Activated CD4-positive, alpha-beta T cell treated with anti-CD3 and anti-CD28 coated beads for 36 hours (primary cell): ENCODE measurements at regions of chr6 and their contacts with region 1.

Region 1: GRCh38 chr6:43053545-43054205 is at the start of gene CUL7:
- DNase-seq: peak; percentile 96
- ATAC-seq: peak; percentile 99
- H3K4me3 Mint-ChIP-seq: peak within 1 kb of the TSS; percentile 99
- H3K27ac Mint-ChIP-seq: peak within 1 kb of the TSS; percentile 97
- H3K4me1 Mint-ChIP-seq: peaks cover 43% of the 10 kb centered on the region
- H3K27me3 Mint-ChIP-seq: no peaks in the 10 kb centered on the region
- total RNA-seq, gene CUL7: 16.3 to 18.0 TPM

Region 2: DNA sequence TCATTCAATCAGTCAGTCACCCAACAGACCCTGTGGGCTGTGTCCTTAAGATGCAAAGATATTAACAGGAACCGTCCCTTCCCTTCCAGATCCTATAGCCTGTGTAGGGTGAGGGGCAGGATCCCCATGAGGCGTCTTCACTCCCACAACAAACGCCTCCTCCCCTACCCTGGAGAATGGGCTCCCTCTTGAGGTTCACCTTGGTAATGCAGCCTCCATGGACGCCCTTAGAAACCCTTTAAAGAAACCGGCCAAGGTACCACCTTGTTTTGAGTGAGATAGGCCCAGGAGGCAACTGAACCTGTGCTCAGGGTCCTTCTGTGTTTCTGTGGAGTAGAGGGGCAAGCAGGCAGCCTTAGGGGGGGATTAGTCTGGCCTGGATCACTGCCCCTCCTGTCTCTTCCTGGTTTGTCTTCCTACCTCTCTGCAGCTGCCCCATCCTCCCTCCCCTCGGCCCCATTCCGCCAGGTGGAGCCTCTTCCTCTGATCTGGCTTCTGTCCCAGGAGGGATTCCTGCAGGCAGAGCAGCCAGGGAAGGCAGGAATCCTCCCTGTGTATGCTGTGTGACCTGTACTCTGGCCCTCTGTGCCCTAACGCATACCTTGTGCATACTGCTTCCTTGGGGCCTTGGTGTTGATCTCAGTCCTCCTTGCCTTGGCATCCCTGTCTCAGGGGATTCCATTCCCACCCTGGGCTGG is 887.1 kb before region 1 on chr6:
- CTCF ChIA-PET with region 1: no interaction called
- POLR2A ChIA-PET with region 1: no interaction called
- intact Hi-C with region 1: no loop called
- DNase-seq: peak; percentile 89
- ATAC-seq: peak; percentile 97
- H3K4me3 Mint-ChIP-seq: no peak overlapping the region
- H3K27ac Mint-ChIP-seq: no peak overlapping the region
- H3K4me1 Mint-ChIP-seq: peaks cover 2% of the 10 kb centered on the region
- H3K27me3 Mint-ChIP-seq: peaks cover 2% of the 10 kb centered on the region

Region 3: GRCh38 chr6:42610416-42610815 is 443.3 kb before region 1 on chr6:
- CTCF ChIA-PET with region 1: no interaction called
- POLR2A ChIA-PET with region 1: no interaction called
- intact Hi-C with region 1: no loop called
- DNase-seq: no peak
- ATAC-seq: peak; percentile 94
- H3K4me3 Mint-ChIP-seq: no peak overlapping the region
- H3K27ac Mint-ChIP-seq: peak overlapping the region; percentile 49
- H3K4me1 Mint-ChIP-seq: peaks cover 10% of the 10 kb centered on the region
- H3K27me3 Mint-ChIP-seq: no peaks in the 10 kb centered on the region

Region 4: GRCh38 chr6:42864602-42865001 is 189.1 kb before region 1 on chr6:
- CTCF ChIA-PET with region 1: no interaction called
- POLR2A ChIA-PET with region 1: no interaction called
- intact Hi-C with region 1: no loop called
- DNase-seq: peak; percentile 26
- ATAC-seq: no peak
- H3K4me3 Mint-ChIP-seq: no peak overlapping the region
- H3K27ac Mint-ChIP-seq: peak overlapping the region; percentile 66
- H3K4me1 Mint-ChIP-seq: no peaks in the 10 kb centered on the region
- H3K27me3 Mint-ChIP-seq: no peaks in the 10 kb centered on the region

Region 5: GRCh38 chr6:42984001-42984923 is 69.4 kb before region 1 on chr6 and contains the start of gene PPP2R5D:
- CTCF ChIA-PET with region 1: interaction called, 3 read pairs
- POLR2A ChIA-PET with region 1: interaction called, 4 read pairs
- intact Hi-C with region 1: loop called (anchors 1 kb)
- DNase-seq: peak; percentile 98
- ATAC-seq: peak; percentile 92
- H3K4me3 Mint-ChIP-seq: peak within 1 kb of the TSS; percentile 79
- H3K27ac Mint-ChIP-seq: peak within 1 kb of the TSS; percentile 82
- H3K4me1 Mint-ChIP-seq: peaks cover 52% of the 10 kb centered on the region
- H3K27me3 Mint-ChIP-seq: no peaks in the 10 kb centered on the region
- total RNA-seq, gene PPP2R5D: 51.0 to 57.3 TPM